ENCODE measurements at regions of chr19 and their contacts with region 1.

Region 1: DNA sequence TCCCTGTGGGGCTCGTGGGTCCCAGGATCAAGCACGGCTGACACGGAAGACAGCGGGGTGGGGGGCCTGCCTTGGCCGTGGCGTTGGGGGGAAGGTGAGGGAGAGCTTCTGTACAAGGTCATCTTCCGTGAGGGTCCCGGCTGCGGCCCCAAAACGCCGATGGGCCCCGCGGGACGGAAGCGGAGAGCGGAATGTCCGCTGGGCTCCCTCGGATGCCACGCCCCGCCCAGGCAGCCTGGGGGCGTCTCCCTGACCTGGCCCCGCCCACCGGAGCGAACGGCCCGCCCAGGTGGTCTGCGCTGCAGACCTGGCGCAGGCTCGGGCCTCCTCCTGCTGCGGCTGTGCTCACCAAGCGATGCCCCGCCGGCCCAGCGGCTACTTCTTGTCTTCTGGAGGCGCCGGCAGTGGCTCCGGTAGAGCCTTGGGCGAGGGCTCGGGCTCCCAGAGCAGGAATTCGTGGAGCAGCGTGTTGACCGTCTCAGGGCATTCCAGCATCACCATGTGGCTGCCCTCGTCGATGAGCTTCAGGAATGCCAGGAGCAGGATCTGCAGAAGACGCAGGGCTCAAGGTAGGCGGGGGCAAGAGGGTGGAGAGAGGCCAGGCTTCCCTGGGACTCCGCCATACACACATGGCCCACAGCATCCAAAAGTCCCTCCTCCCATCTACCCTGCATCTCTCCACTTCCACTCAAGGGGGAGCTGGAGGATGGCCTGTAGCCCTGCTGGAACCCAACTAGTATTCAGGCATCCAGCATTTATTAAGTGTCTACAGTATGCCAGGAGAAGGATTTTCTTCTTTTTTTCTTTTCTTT is 10.7 kb downstream of the ABHD8 start:
- DNase-seq: peak; percentile 90
- ATAC-seq: peak; percentile 93

Region 2: GRCh38 chr19:17245244-17245984 is 47.1 kb before region 1 on chr19 and contains the start of gene NR2F6:
- intact Hi-C with region 1: no loop called
- DNase-seq: no peak
- ATAC-seq: no peak
- total RNA-seq, gene NR2F6: 76.4 TPM

Region 3: GRCh38 chr19:17390665-17391370 is 98.3 kb after region 1 on chr19:
- intact Hi-C with region 1: loop called (anchors 5 kb)
- DNase-seq: peak; percentile 94
- ATAC-seq: peak; percentile 93